CD4-positive, alpha-beta T cell (primary cell): ENCODE measurements at regions of chr3 and their contacts with region 1.

Region 1: GRCh38 chr3:152149832-152150231 is 118.9 kb upstream of the MBNL1 start:
- DNase-seq: no peak
- ATAC-seq: no peak
- H3K4me3 ChIP-seq: no peak overlapping the region
- H3K4me3 Mint-ChIP-seq: no peak overlapping the region
- H3K27ac ChIP-seq: no peak overlapping the region
- H3K27ac Mint-ChIP-seq: no peak overlapping the region
- H3K4me1 ChIP-seq: no peaks in the 10 kb centered on the region
- H3K4me1 Mint-ChIP-seq: peaks cover 6% of the 10 kb centered on the region
- H3K27me3 ChIP-seq: no peaks in the 10 kb centered on the region
- H3K27me3 Mint-ChIP-seq: no peaks in the 10 kb centered on the region
- CTCF ChIP-seq: no peak

Region 2: DNA sequence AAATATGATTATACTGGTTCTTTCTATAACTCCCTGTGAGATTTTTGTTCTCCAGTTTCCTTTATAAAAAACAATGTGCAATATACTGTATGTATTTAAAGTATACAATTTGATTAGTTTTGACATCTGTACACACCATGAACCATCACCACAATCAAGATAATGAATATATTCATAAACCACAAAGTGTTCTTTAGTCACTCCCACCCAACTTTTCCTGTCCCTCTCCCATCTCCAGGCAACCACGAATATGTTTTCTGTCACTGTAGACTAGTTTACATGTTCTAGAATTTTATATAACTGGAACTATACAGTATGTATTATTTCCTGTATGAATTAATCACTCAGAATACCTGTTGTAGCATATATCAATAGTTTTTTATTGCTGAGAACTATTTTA is 58.1 kb before region 1 on chr3:
- CTCF ChIA-PET with region 1: no interaction called
- POLR2A ChIA-PET with region 1: no interaction called
- intact Hi-C with region 1: loop called in 1 of 2 experiments (anchors 2 kb)
- DNase-seq: no peak
- ATAC-seq: no peak
- H3K4me3 ChIP-seq: no peak overlapping the region
- H3K4me3 Mint-ChIP-seq: no peak overlapping the region
- H3K27ac ChIP-seq: no peak overlapping the region
- H3K27ac Mint-ChIP-seq: no peak overlapping the region
- H3K4me1 ChIP-seq: no peaks in the 10 kb centered on the region
- H3K4me1 Mint-ChIP-seq: peaks cover 4% of the 10 kb centered on the region
- H3K27me3 ChIP-seq: no peaks in the 10 kb centered on the region
- H3K27me3 Mint-ChIP-seq: no peaks in the 10 kb centered on the region
- CTCF ChIP-seq: no peak